ENCODE measurements at regions of chr9 and their contacts with region 1.

Region 1: DNA sequence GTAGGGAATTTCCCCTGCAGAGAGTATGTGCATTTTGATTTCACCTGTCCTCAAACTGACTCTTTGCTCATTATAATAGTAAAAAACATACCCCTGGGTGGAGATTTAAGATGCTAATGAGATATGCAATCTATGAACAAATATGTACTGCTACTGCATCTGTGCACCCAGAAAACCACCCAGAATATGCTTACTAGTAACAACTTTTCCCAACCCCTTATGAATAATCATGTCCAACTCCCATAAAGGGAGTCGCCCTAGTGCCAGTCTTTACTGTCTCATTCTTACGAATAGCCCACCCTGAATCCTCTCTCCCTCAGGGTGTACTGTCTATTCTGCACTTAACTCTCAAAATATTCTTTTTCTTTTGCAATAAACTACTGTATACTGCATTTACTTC is 39.0 kb upstream of the ZFP37 start:
- DNase-seq: no peak
- ATAC-seq: no peak
- H3K4me3 ChIP-seq: no peak overlapping the region
- H3K27ac ChIP-seq: no peak overlapping the region
- H3K4me1 ChIP-seq: no peaks in the 10 kb centered on the region
- H3K27me3 ChIP-seq: peaks cover 21 to 68% of the 10 kb centered on the region in 2 donors
- CTCF ChIP-seq: no peak

Region 2: GRCh38 chr9:112921549-112921948 is 174.0 kb before region 1 on chr9:
- intact Hi-C with region 1: loop called in 1 of 2 experiments (anchors 10 kb)
- DNase-seq: peak in 2 of 4 donors; percentile 13 to 35
- ATAC-seq: peak; percentile 71
- H3K4me3 ChIP-seq: no peak overlapping the region
- H3K27ac ChIP-seq: no peak overlapping the region
- H3K4me1 ChIP-seq: peaks cover 0 to 4% of the 10 kb centered on the region in 2 donors
- H3K27me3 ChIP-seq: peaks cover 0 to 14% of the 10 kb centered on the region in 2 donors
- CTCF ChIP-seq: peak; percentile 20 to 27

Region 3: GRCh38 chr9:113166039-113166438 is 70.5 kb after region 1 on chr9:
- intact Hi-C with region 1: no loop called
- DNase-seq: no peak
- ATAC-seq: no peak
- H3K4me3 ChIP-seq: no peak overlapping the region
- H3K27ac ChIP-seq: no peak overlapping the region
- H3K4me1 ChIP-seq: no peaks in the 10 kb centered on the region
- H3K27me3 ChIP-seq: no peaks in the 10 kb centered on the region
- CTCF ChIP-seq: no peak

Measured in left lung (tissue), 14 donors.